ENCODE measurements at regions of chr6 and their contacts with region 1.

Region 1: GRCh38 chr6:139375232-139376016 is 976 bp upstream of the CITED2 start:
- DNase-seq: peak; percentile 65
- ATAC-seq: peak; percentile 69
- H3K4me3 ChIP-seq: peak overlapping the region; percentile 93
- H3K27ac ChIP-seq: peak overlapping the region; percentile 81
- H3K4me1 ChIP-seq: no peaks in the 10 kb centered on the region
- H3K27me3 ChIP-seq: no peaks in the 10 kb centered on the region
- CTCF ChIP-seq: no peak
- EP300 ChIP-seq: 0 out of 4 replicates have a peak, but pooled peaks of 1 of the 2 experiments have one; percentile 52
- POLR2A ChIP-seq: peak; percentile 69; the same call in 1 of the 2 replicates
- RAD21 ChIP-seq: peak; percentile 33

Region 2: GRCh38 chr6:139364302-139364981 is 11.0 kb before region 1 on chr6:
- CTCF ChIA-PET with region 1: interaction called, 16 read pairs
- POLR2A ChIA-PET with region 1: no interaction called
- RAD21 ChIA-PET with region 1: interaction called, 36 read pairs
- SMC1A ChIA-PET with region 1: interaction called, 24 read pairs
- in situ Hi-C with region 1: no loop called
- intact Hi-C with region 1: no loop called
- DNase-seq: peak; percentile 48
- ATAC-seq: peak; percentile 79
- H3K4me3 ChIP-seq: no peak overlapping the region
- H3K27ac ChIP-seq: no peak overlapping the region
- H3K4me1 ChIP-seq: no peaks in the 10 kb centered on the region
- H3K27me3 ChIP-seq: no peaks in the 10 kb centered on the region
- CTCF ChIP-seq: peak; percentile 42 to 71 (median 48); a peak in 5 of 6 replicates
- EP300 ChIP-seq: no peak
- POLR2A ChIP-seq: no peak
- RAD21 ChIP-seq: peak; percentile 92

Region 3: DNA sequence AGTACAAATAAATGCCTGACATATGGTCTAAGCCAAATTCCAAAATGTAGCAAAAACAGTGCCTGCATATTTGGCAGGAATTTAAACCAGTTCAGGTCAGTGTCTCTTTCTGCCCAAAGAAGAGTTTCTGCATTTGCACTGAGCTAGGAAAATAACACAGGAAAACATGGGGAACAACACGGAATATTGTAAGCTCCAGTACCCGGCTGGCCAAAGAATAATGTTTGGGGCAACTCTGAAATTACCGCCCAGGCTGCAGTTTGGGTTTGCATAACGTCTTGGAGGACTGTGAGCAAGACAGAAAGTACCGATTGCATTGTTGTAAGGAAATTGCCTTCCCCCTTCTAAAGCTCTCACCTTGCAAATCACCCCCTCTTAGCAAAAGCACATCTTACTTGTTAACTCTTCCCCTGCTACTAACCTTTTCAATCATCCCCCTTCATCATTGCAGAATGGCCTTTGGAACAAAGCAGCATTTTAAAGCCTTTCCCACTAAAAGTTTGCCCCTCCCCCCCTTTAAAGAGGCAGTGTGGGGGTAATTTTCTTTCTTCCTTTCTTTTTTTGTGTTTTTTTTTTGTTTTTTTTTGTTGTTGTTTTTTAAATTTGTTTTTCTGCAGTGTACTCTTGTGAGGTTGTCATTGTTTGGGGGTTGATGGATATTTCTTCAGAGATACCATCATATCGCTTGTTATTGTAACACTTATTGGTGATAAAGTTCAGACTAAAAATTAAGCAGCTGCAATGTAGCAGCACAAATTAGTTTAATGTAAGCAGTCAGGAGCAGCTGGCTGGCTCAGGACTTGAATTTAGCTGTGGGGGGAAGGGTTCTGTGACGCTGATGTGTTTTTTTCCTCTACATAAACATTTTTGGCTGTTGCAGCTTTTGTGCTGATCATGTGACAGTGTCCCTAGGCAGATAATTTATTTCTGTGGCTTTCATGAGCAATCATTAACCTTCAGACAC is 99.0 kb after region 1 on chr6:
- CTCF ChIA-PET with region 1: no interaction called
- POLR2A ChIA-PET with region 1: no interaction called
- RAD21 ChIA-PET with region 1: interaction called, 16 read pairs
- SMC1A ChIA-PET with region 1: interaction called, 6 read pairs
- in situ Hi-C with region 1: no loop called
- intact Hi-C with region 1: no loop called
- DNase-seq: no peak
- ATAC-seq: peak; percentile 95
- H3K4me3 ChIP-seq: no peak overlapping the region
- H3K27ac ChIP-seq: no peak overlapping the region
- H3K4me1 ChIP-seq: no peaks in the 10 kb centered on the region
- H3K27me3 ChIP-seq: no peaks in the 10 kb centered on the region
- CTCF ChIP-seq: no peak
- EP300 ChIP-seq: no peak
- POLR2A ChIP-seq: no peak
- RAD21 ChIP-seq: no peak

Region 4: GRCh38 chr6:139764498-139764986 is 389.1 kb after region 1 on chr6:
- CTCF ChIA-PET with region 1: interaction called, 6 read pairs
- POLR2A ChIA-PET with region 1: interaction called, 5 read pairs
- RAD21 ChIA-PET with region 1: interaction called, 6 read pairs
- SMC1A ChIA-PET with region 1: interaction called, 13 read pairs
- in situ Hi-C with region 1: no loop called
- intact Hi-C with region 1: loop called (anchors 2 kb)
- DNase-seq: peak; percentile 66
- ATAC-seq: peak; percentile 84
- H3K4me3 ChIP-seq: no peak overlapping the region
- H3K27ac ChIP-seq: peak overlapping the region; percentile 35
- H3K4me1 ChIP-seq: peaks cover 9% of the 10 kb centered on the region; the same call in 1 of the 2 replicates
- H3K27me3 ChIP-seq: no peaks in the 10 kb centered on the region
- CTCF ChIP-seq: no peak
- EP300 ChIP-seq: peak in 1 of 2 experiments; percentile 41; a peak in 1 of 4 replicates
- POLR2A ChIP-seq: no peak
- RAD21 ChIP-seq: no peak

Region 5: DNA sequence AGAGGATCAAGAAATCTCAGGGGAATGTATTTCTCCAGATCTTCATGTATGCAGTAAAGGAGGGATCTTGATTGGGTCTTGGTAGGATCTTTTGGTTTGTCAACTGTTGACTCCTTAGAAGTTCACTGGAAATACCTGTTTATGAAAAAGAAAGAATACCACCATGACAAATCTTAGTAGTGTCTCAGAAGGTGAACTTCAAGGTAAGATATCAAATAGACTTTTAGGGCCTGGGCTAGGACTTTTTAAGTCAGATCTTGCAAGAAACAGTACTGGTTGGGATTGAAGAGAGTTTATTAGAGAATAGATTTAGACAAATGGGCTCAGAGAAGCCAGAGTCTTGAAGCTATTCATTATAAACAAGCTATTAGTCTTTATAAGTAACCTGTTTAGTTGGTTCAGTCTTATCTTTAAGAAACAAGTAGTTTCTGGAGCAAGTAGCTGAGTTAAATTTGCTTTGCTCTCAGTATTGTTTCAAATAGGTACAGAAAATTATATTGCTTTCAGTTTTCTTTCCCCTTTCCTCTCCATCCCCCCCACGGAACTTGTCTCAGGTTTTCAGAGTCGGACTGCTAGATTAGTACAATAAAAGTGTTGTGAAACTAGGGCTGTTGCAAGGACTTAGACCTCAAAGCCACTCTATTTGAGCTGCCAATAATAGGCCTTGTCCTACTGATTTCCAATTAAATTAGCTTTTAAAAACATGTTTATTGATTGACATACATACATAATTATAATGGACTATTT is 528.2 kb after region 1 on chr6:
- CTCF ChIA-PET with region 1: interaction called, 8 read pairs
- POLR2A ChIA-PET with region 1: interaction called, 13 read pairs
- RAD21 ChIA-PET with region 1: interaction called, 24 read pairs
- SMC1A ChIA-PET with region 1: interaction called, 22 read pairs
- in situ Hi-C with region 1: no loop called
- intact Hi-C with region 1: no loop called
- DNase-seq: peak; percentile 75
- ATAC-seq: peak; percentile 97
- H3K4me3 ChIP-seq: no peak overlapping the region
- H3K27ac ChIP-seq: peak overlapping the region; percentile 76
- H3K4me1 ChIP-seq: peaks cover 15% of the 10 kb centered on the region; the same call in 1 of the 2 replicates
- H3K27me3 ChIP-seq: no peaks in the 10 kb centered on the region
- CTCF ChIP-seq: no peak
- EP300 ChIP-seq: peak in 1 of 2 experiments; percentile 54; a peak in 2 of 4 replicates
- POLR2A ChIP-seq: no peak
- RAD21 ChIP-seq: peak; percentile 16; the same call in 1 of the 2 replicates

Region 6: DNA sequence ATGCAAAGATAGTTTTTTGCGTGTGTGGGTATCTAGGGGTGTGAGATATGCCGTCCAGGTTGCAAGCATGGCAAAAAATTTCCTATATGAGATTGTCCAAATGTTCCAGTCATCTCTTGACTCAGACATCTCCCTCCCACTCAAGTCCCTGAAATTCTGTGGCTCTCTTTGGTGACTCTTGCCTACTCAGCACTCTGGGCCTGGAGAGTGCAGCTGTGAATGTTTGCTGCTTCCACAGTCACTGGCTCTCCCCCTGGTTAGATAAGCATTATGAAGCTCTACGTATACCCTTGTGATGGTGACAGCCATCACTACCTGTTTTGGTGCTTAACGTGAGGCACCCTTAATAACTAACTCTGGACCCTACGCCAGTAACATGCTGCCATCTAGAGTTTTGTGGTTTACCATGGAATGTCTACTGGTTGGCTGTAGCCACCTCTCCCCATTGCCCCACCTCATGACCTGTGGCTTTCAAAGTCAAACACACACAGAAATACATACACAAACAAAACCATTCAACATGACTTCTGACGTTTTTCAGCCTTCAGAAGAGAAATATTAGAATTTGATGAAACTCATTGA is 620.9 kb after region 1 on chr6:
- CTCF ChIA-PET with region 1: interaction called, 10 read pairs
- POLR2A ChIA-PET with region 1: no interaction called
- RAD21 ChIA-PET with region 1: interaction called, 16 read pairs
- SMC1A ChIA-PET with region 1: interaction called, 37 read pairs
- in situ Hi-C with region 1: no loop called
- intact Hi-C with region 1: no loop called
- DNase-seq: peak; percentile 35
- ATAC-seq: peak; percentile 87
- H3K4me3 ChIP-seq: no peak overlapping the region
- H3K27ac ChIP-seq: no peak overlapping the region
- H3K4me1 ChIP-seq: no peaks in the 10 kb centered on the region
- H3K27me3 ChIP-seq: no peaks in the 10 kb centered on the region
- CTCF ChIP-seq: peak; percentile 9 to 32 (median 30); a peak in 4 of 6 replicates
- EP300 ChIP-seq: no peak
- POLR2A ChIP-seq: no peak
- RAD21 ChIP-seq: peak; percentile 58; the same call in 1 of the 2 replicates

Region 7: DNA sequence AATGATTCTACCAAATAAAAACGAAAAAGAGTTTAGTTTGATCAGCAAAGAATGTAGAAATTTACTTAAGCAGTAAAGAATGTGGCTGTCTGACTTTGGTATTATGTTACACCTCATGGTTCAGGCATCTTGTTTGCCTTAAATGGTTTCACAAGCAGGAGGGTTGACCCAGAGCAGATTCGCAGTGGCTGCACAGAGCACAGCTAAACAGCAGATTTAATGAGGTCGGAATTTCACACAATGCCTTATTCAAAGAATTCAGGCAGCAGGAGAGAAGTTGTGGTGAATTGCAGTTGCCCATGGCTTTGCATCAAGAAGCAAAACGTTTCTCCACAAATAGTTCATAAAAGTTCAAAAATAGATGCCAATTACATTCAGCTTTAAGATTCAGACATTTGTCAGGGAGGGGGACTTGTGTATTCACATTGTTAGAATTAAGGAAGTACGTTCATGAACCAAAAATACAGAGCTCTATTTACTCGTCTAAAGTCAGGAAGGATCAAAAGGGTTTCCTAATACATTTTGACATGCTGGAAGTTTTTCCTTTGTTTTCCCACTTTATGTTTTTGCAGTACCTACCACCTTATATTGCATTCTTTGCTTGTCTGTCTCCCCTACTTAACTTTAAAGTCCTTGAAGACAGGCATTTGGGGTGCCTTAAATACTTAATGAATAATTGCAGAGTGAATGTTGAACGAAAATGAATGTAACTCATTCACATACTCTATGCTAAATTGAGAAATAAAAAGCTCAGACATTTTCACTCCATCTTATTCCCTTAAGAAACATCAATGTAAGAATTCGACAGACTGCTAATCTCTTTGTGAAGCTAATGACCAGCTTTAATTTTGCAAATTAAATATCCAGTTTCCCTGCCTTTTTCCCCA is 1162.6 kb after region 1 on chr6:
- CTCF ChIA-PET with region 1: no interaction called
- POLR2A ChIA-PET with region 1: no interaction called
- RAD21 ChIA-PET with region 1: interaction called, 7 read pairs
- SMC1A ChIA-PET with region 1: interaction called, 3 read pairs
- in situ Hi-C with region 1: no loop called
- intact Hi-C with region 1: loop called (anchors 5 kb)
- DNase-seq: no peak
- ATAC-seq: peak; percentile 63
- H3K4me3 ChIP-seq: no peak overlapping the region
- H3K27ac ChIP-seq: no peak overlapping the region
- H3K4me1 ChIP-seq: no peaks in the 10 kb centered on the region
- H3K27me3 ChIP-seq: no peaks in the 10 kb centered on the region
- CTCF ChIP-seq: no peak
- EP300 ChIP-seq: no peak; a peak in 1 of 4 replicates
- POLR2A ChIP-seq: no peak
- RAD21 ChIP-seq: no peak